ENCODE measurements at regions of chr12 and their contacts with region 1.

Region 1: DNA sequence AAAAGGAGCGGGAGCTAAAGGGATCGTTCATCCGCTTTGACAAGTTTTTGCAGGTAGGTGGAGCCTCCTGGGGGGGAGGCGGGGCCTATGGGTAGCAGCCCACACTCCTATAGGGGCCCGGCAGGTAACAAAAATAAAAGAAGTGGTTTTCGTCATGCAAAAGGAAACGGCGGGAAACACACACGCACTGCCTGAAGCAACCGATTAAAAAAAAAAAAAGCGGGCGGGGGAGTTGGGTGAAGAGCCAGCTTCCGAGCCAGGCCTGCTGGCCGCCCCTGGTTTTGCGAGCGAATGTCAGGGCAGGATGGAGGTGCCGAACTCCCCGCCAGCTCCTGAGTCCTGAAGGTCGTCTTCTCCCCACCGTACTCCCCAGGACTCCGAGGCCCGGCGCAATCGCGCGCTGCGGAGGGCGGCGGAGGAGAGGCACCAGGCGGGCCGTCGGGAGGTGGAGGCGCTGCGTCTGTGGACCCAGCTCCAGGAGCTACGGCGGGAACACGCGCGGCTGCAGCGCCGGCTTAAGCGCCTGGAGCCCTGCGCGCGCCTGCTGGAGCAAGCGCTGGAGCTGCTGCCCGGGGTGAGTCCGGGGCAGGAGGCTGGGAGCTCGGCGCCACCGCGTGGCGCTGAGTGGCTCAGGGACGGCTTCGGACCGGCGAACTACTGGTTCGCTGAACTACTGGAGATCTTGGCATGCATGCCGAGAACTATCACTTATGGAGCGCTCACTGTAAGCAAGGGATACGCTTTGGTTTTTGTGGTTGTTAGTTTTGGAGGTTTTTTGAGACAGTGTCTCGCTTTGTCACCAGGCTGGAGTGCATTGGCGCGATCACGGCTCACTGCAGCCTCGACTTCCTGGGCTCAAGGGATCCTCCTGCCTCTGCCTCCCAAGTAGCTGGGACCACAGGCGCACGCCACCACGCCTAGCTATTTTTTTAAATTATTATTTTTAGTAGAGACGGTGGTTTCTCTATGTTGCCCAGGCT is 3.6 kb downstream of the CFAP73 start:
- DNase-seq: peak; percentile 51 to 86
- H3K4me3 ChIP-seq: peak overlapping the region; percentile 29 to 59 (median 50)
- H3K27ac ChIP-seq: no peak overlapping the region
- H3K4me1 ChIP-seq: peaks cover 7 to 23% (median 19%) of the 10 kb centered on the region in 4 experiments
- H3K27me3 ChIP-seq: peaks cover 1 to 34% (median 26%) of the 10 kb centered on the region in 4 experiments
- CTCF ChIP-seq: peak; percentile 53 to 61 (median 60)
- EP300 ChIP-seq: no peak
- POLR2A ChIP-seq: no peak
- RAD21 ChIP-seq: peak; percentile 64 to 74

Region 2: GRCh38 chr12:113184900-113185773 is 32.0 kb after region 1 on chr12 and contains the starts of genes DDX54 and RITA1:
- CTCF ChIA-PET with region 1: interaction called, 5 read pairs
- POLR2A ChIA-PET with region 1: interaction called, 19 read pairs
- DNase-seq: peak; percentile 81 to 90
- H3K4me3 ChIP-seq: peak within 1 kb of the TSS; percentile 75 to 90 (median 80)
- H3K27ac ChIP-seq: peak within 1 kb of the TSS; percentile 84
- H3K4me1 ChIP-seq: peaks cover 0 to 6% (median 3%) of the 10 kb centered on the region in 4 experiments; a peak in 4 of 7 replicates
- H3K27me3 ChIP-seq: no peaks in the 10 kb centered on the region
- CTCF ChIP-seq: no peak
- EP300 ChIP-seq: peak in 1 of 2 experiments; percentile 95; a peak in 2 of 3 replicates
- POLR2A ChIP-seq: peak; percentile 78 to 91
- RAD21 ChIP-seq: no peak
- total RNA-seq, gene DDX54: 112 and 113 TPM in 2 replicates
- total RNA-seq, gene RITA1: 25.8 and 26.4 TPM in 2 replicates

Region 3: GRCh38 chr12:113334786-113335540 is 181.8 kb after region 1 on chr12 and contains the start of gene SLC8B1:
- CTCF ChIA-PET with region 1: no interaction called
- POLR2A ChIA-PET with region 1: no interaction called
- DNase-seq: peak; percentile 71 to 99
- H3K4me3 ChIP-seq: peak within 1 kb of the TSS; percentile 61 to 72 (median 68)
- H3K27ac ChIP-seq: no peak within 1 kb of the TSS
- H3K4me1 ChIP-seq: peaks cover 0 to 5% (median 1%) of the 10 kb centered on the region in 4 experiments; a peak in 3 of 7 replicates
- H3K27me3 ChIP-seq: peaks cover 0 to 11% (median 9%) of the 10 kb centered on the region in 4 experiments; a peak in 5 of 7 replicates
- CTCF ChIP-seq: no peak
- EP300 ChIP-seq: no peak
- POLR2A ChIP-seq: peak in 1 of 2 experiments; percentile 87; a peak in 2 of 3 replicates
- RAD21 ChIP-seq: 0 out of 4 replicates have a peak, but pooled peaks of 1 of the 2 experiments have one; percentile 0
- total RNA-seq, gene SLC8B1: 11.2 and 11.3 TPM in 2 replicates

Measured in H1 (cell line).